MCF 10A (cell line): ENCODE measurements at regions of chr5 and their contacts with region 1.

Region 1: DNA sequence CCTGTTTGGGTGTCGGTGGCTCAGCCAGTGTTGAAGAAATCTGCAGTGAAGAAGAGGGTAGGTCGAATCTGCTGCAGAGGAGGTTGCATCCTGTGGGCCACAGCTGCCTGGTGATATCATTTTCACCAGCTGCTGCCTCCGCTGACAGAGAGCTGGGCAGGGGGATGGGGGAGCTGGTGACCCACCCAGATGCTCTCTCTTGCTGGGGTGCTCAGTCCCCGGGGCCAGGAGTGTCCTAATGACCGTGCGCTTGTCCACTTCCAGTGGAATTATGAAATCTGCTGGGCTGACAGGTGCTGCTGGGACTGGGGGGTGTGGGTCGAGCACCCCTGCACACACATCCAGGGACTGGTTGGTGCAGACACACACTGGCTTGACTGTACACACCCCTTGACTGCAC is 83.2 kb upstream of the IRX4 start:
- DNase-seq: no peak
- H3K4me3 Mint-ChIP-seq: no peak overlapping the region
- H3K27ac Mint-ChIP-seq: no peak overlapping the region
- H3K4me1 Mint-ChIP-seq: peaks cover 19% of the 10 kb centered on the region
- H3K27me3 Mint-ChIP-seq: no peaks in the 10 kb centered on the region
- CTCF ChIP-seq: no peak

Region 2: DNA sequence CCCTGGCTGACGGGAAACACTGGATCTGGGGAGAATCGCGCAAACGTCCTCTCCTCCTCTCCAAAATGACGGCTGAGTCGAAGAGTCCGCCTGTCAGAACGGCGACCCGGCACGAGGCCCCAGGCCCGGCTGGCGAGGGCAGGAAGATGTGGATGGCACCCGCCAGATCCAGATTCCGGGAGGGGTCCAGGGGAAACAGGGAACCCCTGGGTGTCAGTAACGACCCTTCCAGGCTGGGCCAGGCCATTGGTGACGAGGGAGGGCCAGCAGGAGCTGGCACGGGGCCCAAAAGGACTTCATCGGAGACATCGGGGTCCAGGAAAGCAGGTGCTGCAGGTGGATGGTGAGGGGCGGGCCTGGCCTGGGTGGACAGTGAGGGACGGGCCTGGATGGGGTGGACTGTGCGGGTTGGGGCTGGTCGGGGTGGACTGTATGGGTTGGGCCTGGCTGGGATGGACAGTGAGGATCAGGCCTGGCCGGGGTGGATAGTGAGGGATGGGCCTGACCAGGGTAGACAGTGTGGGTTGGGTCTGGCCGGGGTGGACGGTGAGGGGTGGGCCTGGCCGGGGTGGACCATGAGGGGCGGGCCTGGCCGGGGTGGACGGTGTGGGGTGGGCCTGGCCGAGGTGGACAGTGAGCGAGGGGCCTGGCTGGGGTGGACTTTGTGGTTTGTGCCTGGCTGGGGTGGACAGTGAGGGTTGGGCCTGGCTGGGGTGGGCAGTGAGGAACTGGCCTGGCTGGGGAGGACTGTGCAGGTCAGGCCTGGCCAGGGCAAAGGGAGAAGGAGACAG is 534.7 kb before region 1 on chr5:
- CTCF ChIA-PET with region 1: no interaction called
- POLR2A ChIA-PET with region 1: no interaction called
- intact Hi-C with region 1: no loop called
- DNase-seq: no peak
- H3K4me3 Mint-ChIP-seq: no peak overlapping the region
- H3K27ac Mint-ChIP-seq: no peak overlapping the region
- H3K4me1 Mint-ChIP-seq: no peaks in the 10 kb centered on the region
- H3K27me3 Mint-ChIP-seq: no peaks in the 10 kb centered on the region
- CTCF ChIP-seq: no peak

Region 3: DNA sequence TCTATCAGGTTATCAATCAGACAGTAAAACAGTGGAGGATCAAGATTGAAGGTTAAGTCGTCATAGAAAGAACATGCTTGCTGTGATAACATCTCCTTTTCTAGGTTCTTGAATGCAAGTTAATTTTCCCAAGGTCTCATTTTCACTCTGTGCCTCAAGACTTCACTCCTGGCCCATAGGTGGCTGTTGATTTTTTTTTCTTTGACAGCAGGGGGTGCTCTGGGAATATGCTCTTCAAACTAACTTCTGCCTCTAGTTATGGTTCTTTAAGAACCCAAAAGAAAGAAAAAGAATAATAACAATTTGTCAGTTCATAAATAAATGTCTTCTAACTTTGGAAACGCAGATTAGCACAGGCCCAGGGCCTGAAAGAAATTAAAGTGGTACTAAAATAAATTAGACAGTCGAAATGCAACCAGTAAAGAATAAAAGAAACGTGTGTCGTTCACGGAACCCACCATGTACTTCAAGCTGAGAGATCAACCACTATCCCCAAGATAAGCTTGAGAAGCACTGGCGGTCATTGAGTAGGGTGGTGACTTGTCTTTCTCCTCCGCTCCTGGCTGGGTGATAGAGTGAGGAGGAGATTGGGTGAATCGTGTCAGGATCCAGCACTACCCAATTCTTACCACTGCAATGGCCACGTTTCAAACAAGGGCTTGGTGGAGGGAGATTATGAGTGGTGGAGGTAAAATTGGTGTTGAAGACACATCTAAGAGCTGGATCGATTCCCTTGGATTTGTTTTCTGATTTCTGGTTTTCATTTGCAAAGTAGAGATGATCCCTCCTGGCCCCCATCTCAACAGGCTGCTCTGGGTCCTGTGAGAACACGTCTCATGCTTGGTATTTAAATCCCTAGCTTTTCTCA is 10.2 kb after region 1 on chr5:
- CTCF ChIA-PET with region 1: interaction called, 3 read pairs
- POLR2A ChIA-PET with region 1: interaction called, 58 read pairs
- intact Hi-C with region 1: no loop called
- DNase-seq: peak; percentile 51
- H3K4me3 Mint-ChIP-seq: no peak overlapping the region
- H3K27ac Mint-ChIP-seq: no peak overlapping the region
- H3K4me1 Mint-ChIP-seq: peaks cover 33% of the 10 kb centered on the region
- H3K27me3 Mint-ChIP-seq: no peaks in the 10 kb centered on the region
- CTCF ChIP-seq: peak; percentile 11